Dorsolateral prefrontal cortex (tissue), 120 donors: ENCODE measurements at regions of chr15 and their contacts with region 1.

Region 1: DNA sequence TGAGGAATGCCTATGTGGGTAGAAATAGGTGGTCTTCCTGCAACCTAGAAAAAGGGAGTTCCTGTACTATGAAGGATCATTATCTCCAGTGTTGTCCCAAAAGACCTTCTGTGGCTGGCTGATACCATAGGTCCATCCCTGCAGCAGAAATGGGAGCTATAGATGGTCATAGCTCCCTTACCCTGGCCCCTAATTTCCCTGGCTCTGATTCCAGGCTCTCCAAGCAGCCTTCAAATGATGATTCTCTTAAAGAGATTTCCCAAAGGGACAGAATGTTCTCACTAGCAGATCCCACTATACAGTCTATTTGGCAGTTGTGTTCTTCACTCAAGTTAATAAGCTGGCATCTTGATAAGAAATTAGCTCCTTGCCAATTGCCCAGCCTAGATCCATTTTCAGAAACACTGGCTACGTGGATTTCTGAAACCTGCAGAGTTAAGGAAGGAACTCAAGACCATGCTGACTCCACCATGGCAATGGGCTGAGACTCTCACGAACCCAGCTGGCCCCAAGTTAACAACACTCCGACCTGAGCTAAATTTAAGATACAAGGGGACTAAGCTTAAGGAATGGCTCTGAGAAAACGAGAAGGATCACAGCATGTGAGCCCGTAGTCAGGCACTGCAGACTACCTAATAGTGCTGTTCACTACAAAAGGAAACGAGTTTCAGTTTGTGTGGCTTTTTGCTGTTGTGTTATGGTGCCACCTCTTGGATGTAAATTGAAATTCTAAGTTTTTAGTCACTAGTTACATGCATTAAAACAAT is 11.4 kb downstream of the C15orf40 start:
- DNase-seq: no peak
- H3K4me3 ChIP-seq: peak overlapping the region in 44 of 59 donors; percentile 4 to 59 (median 36)
- H3K27ac ChIP-seq: peak overlapping the region in 24 of 59 donors; percentile 3 to 77 (median 44)
- H3K27me3 ChIP-seq: no peaks in the 10 kb centered on the region
- CTCF ChIP-seq: peak; percentile 19 to 76 (median 57)

Region 2: DNA sequence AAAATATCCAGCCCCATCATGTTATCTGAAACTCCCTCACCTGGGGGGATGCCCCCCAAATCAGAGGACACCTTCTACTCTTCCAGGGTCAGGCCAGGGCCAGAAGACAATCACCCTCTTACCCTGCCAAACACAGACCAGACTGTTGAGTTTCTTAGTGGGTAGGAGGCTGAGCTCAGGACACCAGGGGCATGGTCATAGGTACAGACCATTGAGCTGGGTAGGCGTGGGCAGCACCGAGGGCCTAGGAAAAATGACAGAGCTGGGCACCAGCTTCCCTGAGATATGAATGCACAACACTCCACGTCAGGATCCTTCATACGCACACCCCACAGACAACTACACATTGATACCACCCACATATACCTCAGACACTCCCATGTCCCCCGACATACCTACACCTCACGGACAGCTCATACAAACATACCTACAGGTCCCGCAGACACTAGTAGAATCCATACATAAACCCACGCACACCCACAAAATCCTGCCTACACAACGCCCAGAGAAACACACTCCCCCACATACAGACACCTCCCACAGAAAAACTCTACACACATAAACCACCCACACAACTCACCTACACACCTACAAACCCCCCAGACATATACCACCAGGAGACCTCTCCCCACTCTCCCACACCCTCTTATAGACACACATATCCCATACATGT is 302.2 kb before region 1 on chr15:
- intact Hi-C with region 1: no loop called
- DNase-seq: no peak
- H3K4me3 ChIP-seq: no peak overlapping the region
- H3K27ac ChIP-seq: peak overlapping the region in 2 of 59 donors; percentile 26 to 31
- H3K27me3 ChIP-seq: no peaks in the 10 kb centered on the region
- CTCF ChIP-seq: no peak

Region 3: GRCh38 chr15:82849556-82850512 is 150.3 kb before region 1 on chr15:
- intact Hi-C with region 1: loop called in 1 of 2 experiments (anchors 10 kb)
- DNase-seq: peak in 7 of 10 donors; percentile 35 to 82 (median 53)
- H3K4me3 ChIP-seq: peak overlapping the region in 3 of 59 donors; percentile 6 to 25 (median 20)
- H3K27ac ChIP-seq: peak overlapping the region in 54 of 59 donors; percentile 10 to 89 (median 66)
- H3K27me3 ChIP-seq: no peaks in the 10 kb centered on the region
- CTCF ChIP-seq: peak in 55 of 56 donors; percentile 26 to 73 (median 58)

Region 4: GRCh38 chr15:82936960-82937711 is 63.0 kb before region 1 on chr15:
- intact Hi-C with region 1: no loop called
- DNase-seq: no peak
- H3K4me3 ChIP-seq: no peak overlapping the region
- H3K27ac ChIP-seq: no peak overlapping the region
- H3K27me3 ChIP-seq: no peaks in the 10 kb centered on the region
- CTCF ChIP-seq: no peak